Astrocyte of the cerebellum (primary cell): ENCODE measurements at regions of chr5 and their contacts with region 1.

Region 1: DNA sequence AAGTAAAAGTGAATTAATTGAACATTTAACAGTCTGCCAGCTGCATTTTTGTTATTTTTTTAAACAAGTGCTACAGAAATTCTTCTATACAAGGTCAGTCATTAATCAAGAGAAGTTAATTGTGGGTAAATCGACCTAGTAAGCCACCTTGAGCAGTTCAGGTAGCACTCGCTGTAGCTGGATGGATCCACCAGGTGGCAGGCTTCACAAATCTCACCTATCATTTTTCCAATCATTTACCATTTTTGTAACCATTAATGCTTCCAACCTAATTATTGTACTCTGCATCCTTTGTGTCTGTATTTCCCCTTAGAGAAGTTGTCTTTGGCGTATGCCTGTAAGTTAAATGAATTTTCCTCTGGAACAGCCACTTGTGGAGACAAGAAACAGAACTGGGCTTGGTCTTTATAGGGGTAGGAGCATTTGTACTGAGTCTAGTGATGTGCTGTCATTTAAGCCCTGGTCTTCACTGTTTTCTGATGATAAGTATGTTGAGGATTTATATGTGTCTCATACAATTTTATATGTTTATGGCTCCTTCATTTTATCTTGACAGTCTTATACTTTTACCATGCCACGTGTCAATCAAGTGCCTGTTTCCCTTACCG is 39.5 kb downstream of the CD180 start:
- DNase-seq: peak; percentile 31
- H3K4me3 ChIP-seq: no peak overlapping the region
- CTCF ChIP-seq: peak; percentile 78

Region 2: DNA sequence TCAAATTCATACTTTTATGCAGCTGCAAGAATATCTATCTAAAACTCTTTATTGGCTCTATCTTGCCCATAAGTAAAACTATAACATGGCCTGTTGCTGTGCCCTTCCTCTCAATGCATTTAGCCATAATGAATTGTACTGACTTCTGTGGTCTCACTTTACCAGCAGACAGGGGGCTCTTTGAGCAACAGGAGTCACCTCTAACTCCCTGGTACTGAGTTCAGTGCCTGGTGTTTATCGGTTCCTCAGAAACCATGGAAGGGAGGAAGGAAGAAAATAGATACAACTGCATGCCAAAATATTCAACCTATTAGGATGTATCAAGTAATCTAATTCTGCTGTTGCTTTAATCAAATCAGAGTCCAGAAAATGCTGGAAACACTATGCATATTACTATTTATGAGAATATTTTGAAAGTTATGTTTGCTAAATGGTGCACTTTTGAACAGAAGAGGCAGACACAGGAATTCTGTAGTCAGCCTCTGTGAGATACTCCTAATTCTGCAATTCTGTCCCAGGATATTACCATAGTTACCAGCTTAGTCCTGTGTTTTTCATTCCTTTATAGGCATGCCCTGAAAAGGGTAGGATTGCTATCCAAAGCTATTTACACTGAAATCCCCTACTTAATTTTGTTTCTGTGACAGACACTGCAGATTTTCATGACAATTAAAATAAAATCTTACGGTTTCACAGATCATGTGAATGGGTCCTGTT is 50.3 kb before region 1 on chr5:
- in situ Hi-C with region 1: no loop called
- DNase-seq: no peak
- H3K4me3 ChIP-seq: no peak overlapping the region
- CTCF ChIP-seq: no peak

Region 3: GRCh38 chr5:67202828-67203227 is 45.7 kb after region 1 on chr5:
- in situ Hi-C with region 1: loop called (anchors 5 kb)
- DNase-seq: no peak
- H3K4me3 ChIP-seq: no peak overlapping the region
- CTCF ChIP-seq: no peak